HCT116 (cell line): ENCODE measurements at regions of chr3 and their contacts with region 1.

Region 1: GRCh38 chr3:138915503-138916498 is 31.1 kb downstream of the FOXL2 start:
- DNase-seq: peak; percentile 61
- ATAC-seq: peak; percentile 87
- H3K4me3 ChIP-seq: peak overlapping the region; percentile 71 to 73
- H3K27ac ChIP-seq: peak overlapping the region; percentile 85
- H3K4me1 ChIP-seq: peaks cover 13 to 15% of the 10 kb centered on the region in 2 experiments; a peak in 3 of 4 replicates
- H3K27me3 ChIP-seq: no peaks in the 10 kb centered on the region
- CTCF ChIP-seq: peak in 2 of 3 experiments; percentile 79 to 82; a peak in 4 of 6 replicates
- POLR2A ChIP-seq: no peak
- RAD21 ChIP-seq: no peak

Region 2: GRCh38 chr3:138459619-138460535 is 455.9 kb before region 1 on chr3:
- CTCF ChIA-PET with region 1: interaction called, 7 read pairs
- POLR2A ChIA-PET with region 1: no interaction called
- RAD21 ChIA-PET with region 1: no interaction called
- intact Hi-C with region 1: loop called (anchors 5 kb)
- DNase-seq: no peak
- ATAC-seq: peak; percentile 26; the same call in 1 of the 2 replicates
- H3K4me3 ChIP-seq: no peak overlapping the region
- H3K27ac ChIP-seq: no peak overlapping the region
- H3K4me1 ChIP-seq: peaks cover 0 to 5% of the 10 kb centered on the region in 2 experiments; a peak in 1 of 4 replicates
- H3K27me3 ChIP-seq: no peaks in the 10 kb centered on the region
- CTCF ChIP-seq: peak in 2 of 3 experiments; percentile 4 to 11; a peak in 1 of 6 replicates
- POLR2A ChIP-seq: no peak
- RAD21 ChIP-seq: peak; percentile 46

Region 3: GRCh38 chr3:138608322-138609135 is 307.3 kb before region 1 on chr3 and contains the start of gene FAIM:
- CTCF ChIA-PET with region 1: interaction called, 5 read pairs
- POLR2A ChIA-PET with region 1: interaction called, 4 read pairs
- RAD21 ChIA-PET with region 1: no interaction called
- intact Hi-C with region 1: loop called (anchors 5 kb)
- DNase-seq: peak; percentile 46
- ATAC-seq: peak; percentile 87
- H3K4me3 ChIP-seq: peak within 1 kb of the TSS; percentile 60 to 71
- H3K27ac ChIP-seq: peak within 1 kb of the TSS; percentile 89
- H3K4me1 ChIP-seq: peaks cover 7 to 25% of the 10 kb centered on the region in 2 experiments
- H3K27me3 ChIP-seq: no peaks in the 10 kb centered on the region
- CTCF ChIP-seq: no peak
- POLR2A ChIP-seq: no peak
- RAD21 ChIP-seq: no peak
- total RNA-seq, gene FAIM: 12.2 TPM

Region 4: DNA sequence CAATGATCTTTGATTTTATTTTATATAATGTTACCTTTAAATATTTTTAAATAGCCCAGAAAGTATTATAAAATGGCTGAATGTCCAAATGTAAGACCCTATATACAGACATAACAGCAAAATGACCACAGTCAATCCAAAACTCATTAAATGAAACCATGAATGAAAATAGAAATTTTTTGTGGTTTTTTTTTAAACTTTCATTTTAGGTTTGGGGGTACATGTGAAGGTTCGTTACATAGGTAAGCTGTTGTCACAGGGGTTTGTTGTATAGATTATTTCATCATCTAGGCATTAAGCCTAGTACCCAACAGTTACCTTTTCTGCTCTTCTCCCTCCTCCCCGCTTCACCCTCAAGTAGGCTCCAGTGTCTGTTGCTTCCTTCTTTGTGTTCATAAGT is 198.5 kb before region 1 on chr3:
- CTCF ChIA-PET with region 1: interaction called, 12 read pairs
- POLR2A ChIA-PET with region 1: no interaction called
- RAD21 ChIA-PET with region 1: no interaction called
- intact Hi-C with region 1: no loop called
- DNase-seq: no peak
- ATAC-seq: no peak
- H3K4me3 ChIP-seq: no peak overlapping the region
- H3K27ac ChIP-seq: no peak overlapping the region
- H3K4me1 ChIP-seq: no peaks in the 10 kb centered on the region
- H3K27me3 ChIP-seq: no peaks in the 10 kb centered on the region
- CTCF ChIP-seq: no peak
- POLR2A ChIP-seq: no peak
- RAD21 ChIP-seq: no peak

Region 5: GRCh38 chr3:138890555-138891187 is 25.1 kb before region 1 on chr3:
- CTCF ChIA-PET with region 1: interaction called, 10 read pairs
- POLR2A ChIA-PET with region 1: no interaction called
- RAD21 ChIA-PET with region 1: no interaction called
- intact Hi-C with region 1: no loop called
- DNase-seq: no peak
- ATAC-seq: no peak
- H3K4me3 ChIP-seq: no peak overlapping the region
- H3K27ac ChIP-seq: no peak overlapping the region
- H3K4me1 ChIP-seq: peaks cover 0 to 10% of the 10 kb centered on the region in 2 experiments; a peak in 2 of 4 replicates
- H3K27me3 ChIP-seq: no peaks in the 10 kb centered on the region
- CTCF ChIP-seq: no peak
- POLR2A ChIP-seq: no peak
- RAD21 ChIP-seq: no peak